CD8-positive, alpha-beta T cell (primary cell): ENCODE measurements at regions of chr6 and their contacts with region 1.

Region 1: GRCh38 chr6:159726918-159727716 is at the start of gene WTAP:
- DNase-seq: peak; percentile 94 to 99 (median 97)
- ATAC-seq: peak; percentile 88
- H3K4me3 ChIP-seq: peak within 1 kb of the TSS; percentile 88 to 94
- H3K4me3 Mint-ChIP-seq: peak within 1 kb of the TSS; percentile 88
- H3K27ac ChIP-seq: peak within 1 kb of the TSS; percentile 93 to 94
- H3K27ac Mint-ChIP-seq: peak within 1 kb of the TSS; percentile 99
- H3K4me1 ChIP-seq: peaks cover 51% of the 10 kb centered on the region
- H3K4me1 Mint-ChIP-seq: peaks cover 58% of the 10 kb centered on the region
- H3K27me3 ChIP-seq: no peaks in the 10 kb centered on the region
- H3K27me3 Mint-ChIP-seq: no peaks in the 10 kb centered on the region
- CTCF ChIP-seq: no peak
- total RNA-seq, gene WTAP: 224 to 226 TPM

Region 2: DNA sequence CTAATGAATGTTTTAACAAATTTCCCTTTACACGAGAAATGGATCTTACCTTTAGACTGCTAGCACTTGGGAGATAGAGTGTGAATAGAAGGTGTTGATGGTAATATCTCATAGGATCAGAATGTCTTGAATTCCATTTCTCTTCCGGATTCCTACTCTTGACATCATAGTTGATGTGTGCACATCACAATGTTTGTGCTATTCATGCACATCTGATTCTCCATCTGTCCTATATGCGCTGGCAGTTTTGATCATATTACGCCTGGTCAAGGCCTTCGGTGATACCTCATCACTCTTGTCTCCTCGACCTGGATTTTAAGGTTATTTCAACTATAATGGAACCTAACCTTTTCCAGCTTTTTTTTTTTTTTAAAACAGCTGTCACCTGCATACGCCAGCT is 18.0 kb after region 1 on chr6:
- CTCF ChIA-PET with region 1: no interaction called
- POLR2A ChIA-PET with region 1: interaction called, 3 read pairs
- intact Hi-C with region 1: loop called in 1 of 2 experiments (anchors 2 kb)
- DNase-seq: no peak
- ATAC-seq: no peak
- H3K4me3 ChIP-seq: no peak overlapping the region
- H3K4me3 Mint-ChIP-seq: no peak overlapping the region
- H3K27ac ChIP-seq: peak overlapping the region in 1 of 2 experiments; percentile 0
- H3K27ac Mint-ChIP-seq: peak overlapping the region; percentile 28
- H3K4me1 ChIP-seq: no peaks in the 10 kb centered on the region
- H3K4me1 Mint-ChIP-seq: peaks cover 36% of the 10 kb centered on the region
- H3K27me3 ChIP-seq: no peaks in the 10 kb centered on the region
- H3K27me3 Mint-ChIP-seq: no peaks in the 10 kb centered on the region
- CTCF ChIP-seq: no peak

Region 3: GRCh38 chr6:159852877-159853276 is 125.8 kb after region 1 on chr6:
- CTCF ChIA-PET with region 1: interaction called, 10 read pairs
- POLR2A ChIA-PET with region 1: interaction called, 13 read pairs
- intact Hi-C with region 1: no loop called
- DNase-seq: peak in 3 of 9 experiments; percentile 29 to 56 (median 41)
- ATAC-seq: peak; percentile 58
- H3K4me3 ChIP-seq: no peak overlapping the region
- H3K4me3 Mint-ChIP-seq: no peak overlapping the region
- H3K27ac ChIP-seq: no peak overlapping the region
- H3K27ac Mint-ChIP-seq: no peak overlapping the region
- H3K4me1 ChIP-seq: no peaks in the 10 kb centered on the region
- H3K4me1 Mint-ChIP-seq: peaks cover 8% of the 10 kb centered on the region
- H3K27me3 ChIP-seq: no peaks in the 10 kb centered on the region
- H3K27me3 Mint-ChIP-seq: peaks cover 1% of the 10 kb centered on the region
- CTCF ChIP-seq: peak; percentile 51

Region 4: DNA sequence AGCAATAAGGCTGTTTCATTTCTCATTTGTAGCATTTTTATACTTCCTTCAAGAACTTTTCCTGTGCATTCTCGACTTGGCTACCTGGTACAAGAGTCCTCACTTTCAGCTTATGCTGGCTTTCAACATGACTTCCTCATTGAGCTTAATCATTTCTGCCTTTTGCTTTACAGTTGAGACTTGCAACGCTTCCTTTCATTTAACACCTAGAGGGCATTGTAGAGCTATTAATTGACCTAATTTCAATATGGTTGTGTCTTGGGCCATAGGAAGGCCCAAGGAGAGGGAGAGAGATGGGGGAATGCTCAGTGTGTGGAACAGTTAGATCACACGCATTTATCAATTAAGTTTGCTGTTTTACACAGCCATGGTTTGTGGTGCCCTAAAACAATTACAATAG is 494.3 kb after region 1 on chr6:
- CTCF ChIA-PET with region 1: no interaction called
- POLR2A ChIA-PET with region 1: no interaction called
- intact Hi-C with region 1: no loop called
- DNase-seq: no peak
- ATAC-seq: no peak
- H3K4me3 ChIP-seq: no peak overlapping the region
- H3K4me3 Mint-ChIP-seq: no peak overlapping the region
- H3K27ac ChIP-seq: no peak overlapping the region
- H3K27ac Mint-ChIP-seq: no peak overlapping the region
- H3K4me1 ChIP-seq: no peaks in the 10 kb centered on the region
- H3K4me1 Mint-ChIP-seq: no peaks in the 10 kb centered on the region
- H3K27me3 ChIP-seq: no peaks in the 10 kb centered on the region
- H3K27me3 Mint-ChIP-seq: peaks cover 23% of the 10 kb centered on the region
- CTCF ChIP-seq: no peak

Region 5: GRCh38 chr6:160462551-160463109 is 735.5 kb after region 1 on chr6:
- CTCF ChIA-PET with region 1: no interaction called
- POLR2A ChIA-PET with region 1: no interaction called
- intact Hi-C with region 1: loop called in 1 of 2 experiments (anchors 2 kb)
- DNase-seq: peak in 8 of 9 experiments; percentile 35 to 92 (median 61)
- ATAC-seq: peak; percentile 89
- H3K4me3 ChIP-seq: peak overlapping the region; percentile 2 to 34
- H3K4me3 Mint-ChIP-seq: peak overlapping the region; percentile 32
- H3K27ac ChIP-seq: peak overlapping the region in 1 of 2 experiments; percentile 43
- H3K27ac Mint-ChIP-seq: peak overlapping the region; percentile 57
- H3K4me1 ChIP-seq: peaks cover 46% of the 10 kb centered on the region
- H3K4me1 Mint-ChIP-seq: peaks cover 82% of the 10 kb centered on the region
- H3K27me3 ChIP-seq: no peaks in the 10 kb centered on the region
- H3K27me3 Mint-ChIP-seq: peaks cover 42% of the 10 kb centered on the region
- CTCF ChIP-seq: no peak